ENCODE measurements at regions of chr11 and their contacts with region 1.

Region 1: DNA sequence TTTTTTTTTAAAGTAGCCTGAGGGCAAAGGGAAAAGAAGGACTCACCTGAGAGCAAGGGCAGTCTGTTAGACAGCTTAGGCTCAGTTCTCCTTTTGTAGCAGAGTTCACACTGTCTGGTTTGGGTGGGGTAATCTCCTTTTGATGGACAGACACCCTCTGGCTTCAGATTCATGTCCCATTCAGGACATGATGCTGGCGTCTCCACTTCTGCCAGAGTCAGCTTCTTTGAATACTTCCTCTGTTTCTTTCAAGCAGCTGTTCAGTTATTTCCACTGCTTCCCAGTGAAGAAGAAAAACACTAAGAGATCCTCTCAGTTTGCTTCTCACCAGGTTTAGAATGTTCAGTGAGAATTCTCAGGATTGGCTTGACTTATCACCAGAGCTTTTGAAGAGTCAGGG is 79.0 kb upstream of the HSD17B12 start:
- DNase-seq: no peak
- ATAC-seq: no peak
- H3K4me3 ChIP-seq: no peak overlapping the region
- H3K27ac ChIP-seq: no peak overlapping the region
- H3K4me1 ChIP-seq: no peaks in the 10 kb centered on the region
- H3K27me3 ChIP-seq: no peaks in the 10 kb centered on the region; a peak in 1 of 4 replicates
- CTCF ChIP-seq: no peak
- EP300 ChIP-seq: no peak
- POLR2A ChIP-seq: no peak
- RAD21 ChIP-seq: no peak

Region 2: DNA sequence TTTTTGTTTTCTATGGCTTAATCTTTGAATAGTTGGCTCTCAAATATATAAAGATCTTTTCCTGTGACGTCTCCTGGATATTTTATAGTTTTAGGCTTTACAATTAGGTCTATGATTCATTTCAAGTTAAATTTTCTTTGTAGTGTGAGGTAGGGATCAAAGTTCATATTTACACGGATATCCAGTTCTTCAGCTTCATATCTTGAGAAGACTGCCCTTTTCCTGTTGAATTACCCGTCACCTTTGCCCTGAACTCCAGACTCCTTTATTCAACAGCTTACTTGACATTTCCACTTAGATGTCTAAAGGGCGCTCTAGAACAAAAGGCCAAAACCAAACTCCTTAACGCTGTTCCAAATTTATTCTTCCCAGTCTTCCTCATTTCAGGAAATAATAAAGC is 191.1 kb before region 1 on chr11:
- CTCF ChIA-PET with region 1: no interaction called
- POLR2A ChIA-PET with region 1: no interaction called
- RAD21 ChIA-PET with region 1: no interaction called
- SMC1A ChIA-PET with region 1: no interaction called
- in situ Hi-C with region 1: no loop called
- intact Hi-C with region 1: no loop called
- DNase-seq: no peak
- ATAC-seq: no peak
- H3K4me3 ChIP-seq: no peak overlapping the region
- H3K27ac ChIP-seq: no peak overlapping the region
- H3K4me1 ChIP-seq: no peaks in the 10 kb centered on the region
- H3K27me3 ChIP-seq: no peaks in the 10 kb centered on the region
- CTCF ChIP-seq: no peak
- EP300 ChIP-seq: no peak
- POLR2A ChIP-seq: no peak
- RAD21 ChIP-seq: no peak

Region 3: DNA sequence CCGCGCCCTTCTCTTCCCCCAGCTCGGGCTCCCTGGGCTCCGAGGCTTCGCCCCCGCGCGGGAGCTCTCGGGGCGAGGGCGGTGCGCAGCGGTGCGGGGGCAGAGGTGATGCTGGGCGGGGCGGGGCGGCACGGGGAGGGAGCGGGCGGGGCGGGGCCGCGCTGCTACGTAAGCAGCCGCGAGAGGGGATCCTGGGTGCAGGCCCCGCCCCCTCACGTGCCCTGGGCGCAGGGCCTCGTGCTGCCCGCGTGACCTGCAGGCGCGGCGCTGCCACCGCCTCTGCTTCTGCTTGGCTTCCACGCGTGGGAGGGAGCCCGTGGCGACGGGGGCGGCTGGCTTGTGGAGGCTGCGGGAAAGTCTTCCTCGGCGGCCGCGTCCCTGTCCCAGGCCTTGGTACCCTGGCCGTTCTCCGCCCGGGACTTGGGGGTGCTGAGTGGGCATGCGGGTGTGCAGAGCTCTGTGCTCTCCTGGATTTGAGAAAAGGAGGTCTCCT is 53.6 kb before region 1 on chr11:
- CTCF ChIA-PET with region 1: no interaction called
- POLR2A ChIA-PET with region 1: no interaction called
- RAD21 ChIA-PET with region 1: no interaction called
- SMC1A ChIA-PET with region 1: no interaction called
- in situ Hi-C with region 1: loop called (anchors 5 kb)
- intact Hi-C with region 1: no loop called
- DNase-seq: no peak
- ATAC-seq: no peak
- H3K4me3 ChIP-seq: no peak overlapping the region
- H3K27ac ChIP-seq: no peak overlapping the region
- H3K4me1 ChIP-seq: peaks cover under 1% of the 10 kb centered on the region; the same call in 1 of the 2 replicates
- H3K27me3 ChIP-seq: peaks cover under 1 to 6% of the 10 kb centered on the region in 2 experiments
- CTCF ChIP-seq: no peak
- EP300 ChIP-seq: no peak
- POLR2A ChIP-seq: no peak
- RAD21 ChIP-seq: no peak

Region 4: DNA sequence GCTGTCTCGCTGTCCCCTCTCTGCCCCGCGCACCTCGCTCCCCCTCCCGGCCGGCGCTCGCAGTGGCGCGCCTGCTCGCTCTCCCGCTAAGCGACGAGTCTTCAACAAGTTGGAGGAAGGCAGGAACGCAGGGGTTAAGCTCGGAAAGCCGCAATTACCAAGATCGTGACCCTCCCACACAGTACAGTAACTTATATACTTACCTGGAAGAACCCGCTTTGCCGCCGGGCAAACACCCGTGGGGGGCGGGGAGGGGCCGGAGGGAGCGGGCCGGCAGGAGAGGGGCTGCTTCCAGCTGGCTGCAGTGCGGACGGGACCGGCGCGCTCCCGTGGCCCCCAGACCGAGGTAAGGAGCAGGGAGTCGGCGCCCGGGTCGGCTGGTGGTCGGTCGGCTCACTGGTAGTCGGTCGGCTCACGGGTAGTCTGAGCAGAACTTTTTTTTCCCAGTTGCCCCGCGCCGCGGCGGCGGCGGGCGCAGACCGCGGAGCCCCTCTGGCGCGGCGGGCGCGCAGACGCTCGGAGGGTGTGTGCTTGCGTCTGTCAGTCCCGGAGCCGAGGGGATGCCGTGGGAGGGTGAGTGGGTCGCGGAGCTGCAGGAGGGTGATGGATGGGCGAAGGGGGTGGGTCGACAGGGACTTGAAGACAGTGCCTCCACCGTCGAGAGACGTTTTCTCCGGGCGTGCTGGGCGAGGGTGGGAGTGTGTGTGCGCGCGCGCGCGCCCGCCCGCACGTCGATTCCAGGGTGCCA is 22.2 kb before region 1 on chr11:
- CTCF ChIA-PET with region 1: no interaction called
- POLR2A ChIA-PET with region 1: no interaction called
- RAD21 ChIA-PET with region 1: no interaction called
- SMC1A ChIA-PET with region 1: no interaction called
- in situ Hi-C with region 1: no loop called
- intact Hi-C with region 1: no loop called
- DNase-seq: no peak
- ATAC-seq: peak; percentile 73
- H3K4me3 ChIP-seq: peak overlapping the region; percentile 58; the same call in 1 of the 2 replicates
- H3K27ac ChIP-seq: no peak overlapping the region
- H3K4me1 ChIP-seq: no peaks in the 10 kb centered on the region
- H3K27me3 ChIP-seq: peaks cover 33 to 53% of the 10 kb centered on the region in 2 experiments
- CTCF ChIP-seq: peak in 2 of 3 experiments; percentile 21 to 27; a peak in 3 of 6 replicates
- EP300 ChIP-seq: no peak
- POLR2A ChIP-seq: no peak
- RAD21 ChIP-seq: 0 out of 2 replicates have a peak, but pooled peaks have one; percentile 20

Region 5: DNA sequence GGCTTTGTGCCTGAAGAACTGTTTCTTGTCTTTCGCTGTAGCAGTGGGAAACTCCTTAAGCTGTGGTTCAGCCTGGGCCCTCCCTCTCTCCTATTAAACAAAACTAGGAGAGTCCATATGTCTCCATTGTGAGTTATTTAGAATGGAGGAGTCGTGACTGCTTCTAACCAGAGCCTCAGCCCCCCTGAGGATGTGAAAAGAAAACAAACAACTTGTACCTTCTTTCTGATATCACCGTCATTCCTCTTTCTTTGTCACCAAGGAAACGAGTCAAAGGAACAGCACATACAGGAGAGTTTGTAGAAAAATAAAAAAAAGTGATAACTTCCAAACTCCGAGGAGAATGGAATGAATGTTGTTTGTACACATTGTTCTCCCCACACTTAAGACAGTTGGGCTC is 482.4 kb after region 1 on chr11:
- CTCF ChIA-PET with region 1: no interaction called
- POLR2A ChIA-PET with region 1: no interaction called
- RAD21 ChIA-PET with region 1: no interaction called
- SMC1A ChIA-PET with region 1: no interaction called
- in situ Hi-C with region 1: no loop called
- intact Hi-C with region 1: no loop called
- DNase-seq: no peak
- ATAC-seq: no peak
- H3K4me3 ChIP-seq: no peak overlapping the region
- H3K27ac ChIP-seq: no peak overlapping the region
- H3K4me1 ChIP-seq: no peaks in the 10 kb centered on the region
- H3K27me3 ChIP-seq: no peaks in the 10 kb centered on the region
- CTCF ChIP-seq: no peak
- EP300 ChIP-seq: no peak
- POLR2A ChIP-seq: no peak
- RAD21 ChIP-seq: no peak